Mammary epithelial cell (primary cell): ENCODE measurements at regions of chr10 and their contacts with region 1.

Region 1: DNA sequence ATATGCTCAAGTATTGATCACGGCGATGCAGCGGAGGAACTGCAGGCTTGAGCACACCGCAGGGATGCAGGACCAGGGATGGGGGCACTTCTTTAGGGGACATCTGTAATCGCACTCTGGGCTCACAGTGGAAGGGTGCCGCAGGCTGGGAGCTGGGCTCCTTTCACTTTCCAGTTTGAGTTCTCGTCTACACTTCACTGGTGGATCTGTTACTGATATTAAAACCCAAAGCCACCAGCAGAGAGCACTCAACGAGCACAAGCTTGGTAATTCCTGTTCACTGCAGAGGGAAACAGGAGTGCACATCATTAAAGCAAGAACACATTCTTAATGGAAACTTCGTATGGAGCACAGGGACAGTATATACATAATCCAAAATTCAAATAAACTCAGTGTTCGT is 91.3 kb downstream of the PARD3 start:
- DNase-seq: peak; percentile 62
- H3K4me3 ChIP-seq: peak overlapping the region in 1 of 3 experiments; percentile 0
- H3K27ac ChIP-seq: no peak overlapping the region
- H3K4me1 ChIP-seq: peaks cover 55% of the 10 kb centered on the region
- H3K27me3 ChIP-seq: no peaks in the 10 kb centered on the region
- CTCF ChIP-seq: peak; percentile 32 to 71

Region 2: DNA sequence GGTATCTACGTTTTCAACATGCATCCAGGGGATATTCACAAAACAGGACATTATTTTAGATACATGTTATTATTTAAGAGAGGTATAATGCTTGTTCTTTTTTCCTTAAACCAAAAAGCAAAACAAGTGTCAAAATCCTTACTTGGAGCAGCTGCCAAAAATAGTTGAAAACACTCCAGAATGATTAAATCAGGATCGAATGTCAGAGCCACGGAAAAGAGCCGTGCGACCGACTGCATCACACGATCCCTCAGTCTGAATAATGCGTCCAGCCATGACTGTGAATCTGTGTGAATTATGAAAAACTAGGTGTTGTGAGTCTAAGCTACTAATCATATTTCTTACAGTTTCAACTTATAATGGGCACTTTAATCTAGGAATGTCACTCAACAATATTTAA is 34.7 kb before region 1 on chr10:
- CTCF ChIA-PET with region 1: interaction called, 5 read pairs
- dilution Hi-C with region 1: no loop called
- in situ Hi-C with region 1: no loop called
- intact Hi-C with region 1: loop called (anchors 1 kb)
- DNase-seq: no peak
- H3K4me3 ChIP-seq: no peak overlapping the region
- H3K27ac ChIP-seq: no peak overlapping the region
- H3K4me1 ChIP-seq: peaks cover 6% of the 10 kb centered on the region
- H3K27me3 ChIP-seq: no peaks in the 10 kb centered on the region
- CTCF ChIP-seq: no peak

Region 3: GRCh38 chr10:34815185-34816084 is 91.7 kb after region 1 on chr10 and contains the start of gene PARD3:
- CTCF ChIA-PET with region 1: no interaction called
- dilution Hi-C with region 1: loop called (anchors 5 kb)
- in situ Hi-C with region 1: no loop called
- intact Hi-C with region 1: loop called (anchors 2 kb)
- DNase-seq: peak; percentile 42
- H3K4me3 ChIP-seq: peak within 1 kb of the TSS; percentile 81 to 94 (median 85)
- H3K27ac ChIP-seq: peak within 1 kb of the TSS; percentile 57
- H3K4me1 ChIP-seq: peaks cover 26% of the 10 kb centered on the region
- H3K27me3 ChIP-seq: no peaks in the 10 kb centered on the region
- CTCF ChIP-seq: no peak
- total RNA-seq, gene PARD3: 47.1 to 58.7 TPM

Region 4: GRCh38 chr10:34960983-34961382 is 237.2 kb after region 1 on chr10:
- CTCF ChIA-PET with region 1: no interaction called
- dilution Hi-C with region 1: no loop called
- in situ Hi-C with region 1: no loop called
- intact Hi-C with region 1: loop called (anchors 1 kb)
- DNase-seq: peak; percentile 18
- H3K4me3 ChIP-seq: no peak overlapping the region
- H3K27ac ChIP-seq: no peak overlapping the region
- H3K4me1 ChIP-seq: no peaks in the 10 kb centered on the region
- H3K27me3 ChIP-seq: no peaks in the 10 kb centered on the region
- CTCF ChIP-seq: peak; percentile 18 to 48

Region 5: GRCh38 chr10:34994565-34995142 is 270.9 kb after region 1 on chr10:
- CTCF ChIA-PET with region 1: interaction called, 6 read pairs
- dilution Hi-C with region 1: loop called (anchors 5 kb)
- in situ Hi-C with region 1: loop called in 1 of 2 experiments (anchors 25 kb)
- intact Hi-C with region 1: no loop called
- DNase-seq: peak; percentile 80
- H3K4me3 ChIP-seq: no peak overlapping the region
- H3K27ac ChIP-seq: peak overlapping the region; percentile 59
- H3K4me1 ChIP-seq: peaks cover 28% of the 10 kb centered on the region
- H3K27me3 ChIP-seq: no peaks in the 10 kb centered on the region
- CTCF ChIP-seq: peak; percentile 66 to 92

Region 6: GRCh38 chr10:35218339-35218955 is 494.7 kb after region 1 on chr10:
- CTCF ChIA-PET with region 1: no interaction called
- dilution Hi-C with region 1: no loop called
- in situ Hi-C with region 1: loop called in 1 of 2 experiments (anchors 25 kb)
- intact Hi-C with region 1: no loop called
- DNase-seq: peak; percentile 65
- H3K4me3 ChIP-seq: no peak overlapping the region
- H3K27ac ChIP-seq: no peak overlapping the region
- H3K4me1 ChIP-seq: no peaks in the 10 kb centered on the region
- H3K27me3 ChIP-seq: no peaks in the 10 kb centered on the region
- CTCF ChIP-seq: peak; percentile 74 to 77

Region 7: GRCh38 chr10:35875016-35875676 is 1151.4 kb after region 1 on chr10:
- CTCF ChIA-PET with region 1: no interaction called
- dilution Hi-C with region 1: no loop called
- in situ Hi-C with region 1: no loop called
- intact Hi-C with region 1: no loop called
- DNase-seq: no peak
- H3K4me3 ChIP-seq: no peak overlapping the region
- H3K27ac ChIP-seq: no peak overlapping the region
- H3K4me1 ChIP-seq: no peaks in the 10 kb centered on the region
- H3K27me3 ChIP-seq: no peaks in the 10 kb centered on the region
- CTCF ChIP-seq: no peak